PC-3 (cell line): ENCODE measurements at regions of chr3 and their contacts with region 1.

Region 1: GRCh38 chr3:122533931-122534334 is 19.2 kb upstream of the KPNA1 start:
- DNase-seq: peak; percentile 100
- ATAC-seq: peak; percentile 100
- H3K4me3 ChIP-seq: no peak overlapping the region
- H3K27ac ChIP-seq: peak overlapping the region; percentile 72
- H3K4me1 ChIP-seq: peaks cover 29% of the 10 kb centered on the region
- H3K27me3 ChIP-seq: no peaks in the 10 kb centered on the region
- CTCF ChIP-seq: no peak

Region 2: GRCh38 chr3:122458992-122459391 is 74.9 kb before region 1 on chr3:
- CTCF ChIA-PET with region 1: no interaction called
- POLR2A ChIA-PET with region 1: no interaction called
- intact Hi-C with region 1: loop called (anchors 1 kb)
- DNase-seq: peak; percentile 75
- ATAC-seq: peak; percentile 81
- H3K4me3 ChIP-seq: no peak overlapping the region
- H3K27ac ChIP-seq: no peak overlapping the region
- H3K4me1 ChIP-seq: no peaks in the 10 kb centered on the region
- H3K27me3 ChIP-seq: no peaks in the 10 kb centered on the region
- CTCF ChIP-seq: peak; percentile 83

Region 3: DNA sequence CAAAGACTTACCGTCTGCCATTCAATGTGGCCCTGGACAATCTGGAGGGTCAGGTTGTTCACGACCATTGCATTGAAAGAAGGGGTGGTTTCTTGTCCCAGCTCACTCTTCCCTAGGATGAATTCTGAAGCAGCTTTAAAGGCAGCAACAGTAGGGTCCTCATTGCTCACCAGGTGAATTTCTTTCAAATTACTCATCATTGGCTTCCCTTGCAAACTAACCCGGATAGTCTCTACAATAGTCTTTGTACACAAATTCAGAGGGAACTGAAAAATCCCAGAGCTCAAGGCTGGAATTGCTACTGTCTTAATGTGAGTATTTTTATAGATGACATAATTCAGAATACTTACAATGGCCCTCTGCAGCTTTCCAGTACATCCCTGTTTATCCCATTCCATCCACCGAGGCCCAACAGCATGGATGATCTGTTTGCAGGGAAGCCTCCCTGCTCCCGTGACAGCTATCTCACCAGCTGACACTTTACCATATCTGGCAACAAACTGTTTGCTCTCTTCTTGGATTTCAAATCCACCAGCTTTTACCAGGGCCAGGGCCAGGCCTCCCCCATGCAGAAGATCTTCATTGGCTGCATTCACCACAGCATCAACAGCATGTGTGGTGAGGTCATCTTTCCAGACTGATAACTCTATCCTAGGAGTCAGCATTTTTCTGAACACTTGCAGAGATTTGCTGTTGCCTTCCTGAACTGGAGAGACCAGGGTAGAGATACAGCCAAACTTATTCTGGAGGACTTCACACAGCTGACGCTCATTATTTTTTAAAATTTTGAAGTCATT is 21.5 kb after region 1 on chr3:
- CTCF ChIA-PET with region 1: no interaction called
- POLR2A ChIA-PET with region 1: no interaction called
- intact Hi-C with region 1: loop called (anchors 2 kb)
- DNase-seq: peak; percentile 87
- ATAC-seq: peak; percentile 96
- H3K4me3 ChIP-seq: no peak overlapping the region
- H3K27ac ChIP-seq: 0 out of 2 replicates have a peak overlapping the region, but pooled peaks have one; percentile 3
- H3K4me1 ChIP-seq: peaks cover 14% of the 10 kb centered on the region
- H3K27me3 ChIP-seq: no peaks in the 10 kb centered on the region
- CTCF ChIP-seq: no peak

Region 4: DNA sequence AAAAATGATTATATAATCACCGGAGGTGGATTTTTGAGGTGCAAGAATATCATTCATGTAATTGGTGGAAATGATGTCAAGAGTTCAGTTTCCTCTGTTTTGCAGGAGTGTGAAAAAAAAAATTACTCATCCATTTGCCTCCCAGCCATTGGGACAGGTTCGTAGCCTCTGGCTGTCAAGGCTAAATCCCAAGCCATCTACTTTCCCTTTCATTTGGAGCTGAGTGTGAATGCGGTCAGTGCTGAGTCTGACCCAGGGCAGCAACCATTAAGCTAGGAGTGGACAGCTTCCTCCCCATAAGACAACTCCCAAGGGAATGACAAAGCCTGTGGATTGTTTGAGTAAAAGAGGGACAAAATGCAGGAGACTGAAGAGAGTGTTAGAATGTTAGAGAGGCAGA is 180.3 kb after region 1 on chr3:
- CTCF ChIA-PET with region 1: no interaction called
- POLR2A ChIA-PET with region 1: no interaction called
- intact Hi-C with region 1: no loop called
- DNase-seq: no peak
- ATAC-seq: no peak
- H3K4me3 ChIP-seq: no peak overlapping the region
- H3K27ac ChIP-seq: no peak overlapping the region
- H3K4me1 ChIP-seq: no peaks in the 10 kb centered on the region
- H3K27me3 ChIP-seq: no peaks in the 10 kb centered on the region
- CTCF ChIP-seq: no peak